Calu3 (cell line): ENCODE measurements at regions of chr18 and their contacts with region 1.

Region 1: GRCh38 chr18:57801761-57802212 is 1.3 kb downstream of the ATP8B1 start:
- DNase-seq: peak; percentile 56
- H3K4me3 Mint-ChIP-seq: peak overlapping the region; percentile 96
- H3K27ac Mint-ChIP-seq: peak overlapping the region; percentile 84
- H3K4me1 Mint-ChIP-seq: peaks cover 40% of the 10 kb centered on the region
- H3K27me3 Mint-ChIP-seq: no peaks in the 10 kb centered on the region
- CTCF ChIP-seq: no peak

Region 2: DNA sequence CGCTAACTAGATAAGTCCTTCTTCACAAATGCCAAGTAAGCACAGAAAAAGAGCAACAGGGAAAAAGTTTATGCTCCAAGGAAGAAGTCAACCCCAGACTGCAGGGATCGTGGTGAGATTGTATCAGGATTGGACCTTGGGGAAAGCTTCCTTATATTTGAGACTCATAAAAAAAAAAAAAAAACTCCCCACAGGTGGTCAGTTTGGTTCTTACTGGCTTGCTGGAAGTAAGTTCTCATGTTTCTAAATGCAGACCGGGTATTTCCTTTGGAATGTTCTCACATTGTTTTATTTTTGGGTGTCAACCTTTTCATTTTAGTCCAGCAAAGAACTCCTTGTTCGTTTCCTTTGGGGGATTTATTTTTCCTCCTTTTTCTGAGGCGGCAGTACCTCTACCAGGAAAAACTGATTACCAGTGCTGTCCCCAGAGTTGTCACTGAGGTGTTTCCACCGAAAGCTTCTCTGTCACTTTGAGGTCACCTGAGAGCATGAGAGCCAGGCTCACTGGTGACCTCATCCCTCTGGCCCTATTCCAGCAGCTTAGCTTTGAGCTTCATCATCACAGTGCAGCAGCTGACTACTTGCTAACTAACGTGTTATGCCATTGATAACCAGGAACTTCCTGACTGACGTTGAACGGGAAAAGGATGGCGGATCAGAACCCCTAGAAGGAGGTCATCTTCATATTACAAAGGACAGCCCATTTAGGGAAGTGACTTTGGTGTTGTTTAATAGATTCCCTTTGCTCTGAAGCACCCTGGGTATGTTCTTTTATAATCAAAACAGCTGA is 18.1 kb after region 1 on chr18:
- CTCF ChIA-PET with region 1: interaction called, 10 read pairs
- intact Hi-C with region 1: no loop called
- DNase-seq: peak; percentile 89
- H3K4me3 Mint-ChIP-seq: peak overlapping the region; percentile 33
- H3K27ac Mint-ChIP-seq: peak overlapping the region; percentile 58
- H3K4me1 Mint-ChIP-seq: peaks cover 25% of the 10 kb centered on the region
- H3K27me3 Mint-ChIP-seq: no peaks in the 10 kb centered on the region
- CTCF ChIP-seq: no peak

Region 3: GRCh38 chr18:57869228-57869627 is 67.4 kb after region 1 on chr18:
- CTCF ChIA-PET with region 1: no interaction called
- intact Hi-C with region 1: no loop called
- DNase-seq: no peak
- H3K4me3 Mint-ChIP-seq: no peak overlapping the region
- H3K27ac Mint-ChIP-seq: no peak overlapping the region
- H3K4me1 Mint-ChIP-seq: peaks cover 11% of the 10 kb centered on the region
- H3K27me3 Mint-ChIP-seq: no peaks in the 10 kb centered on the region
- CTCF ChIP-seq: no peak